Heart left ventricle (tissue), 16 donors: ENCODE measurements at regions of chr11 and their contacts with region 1.

Region 1: GRCh38 chr11:18650859-18651557 is 16.9 kb upstream of the SPTY2D1 start:
- DNase-seq: peak in 4 of 5 donors; percentile 18 to 37 (median 24)
- ATAC-seq: peak in 3 of 4 donors; percentile 13 to 50 (median 22)
- H3K4me3 ChIP-seq: no peak overlapping the region
- H3K27ac ChIP-seq: no peak overlapping the region
- H3K4me1 ChIP-seq: no peaks in the 10 kb centered on the region
- H3K27me3 ChIP-seq: no peaks in the 10 kb centered on the region
- CTCF ChIP-seq: peak in 11 of 12 donors; percentile 20 to 50 (median 44)
- POLR2A ChIP-seq: no peak

Region 2: GRCh38 chr11:18677560-18677959 is 26.6 kb after region 1 on chr11:
- intact Hi-C with region 1: loop called in 1 of 10 experiments (anchors 2 kb)
- DNase-seq: no peak
- ATAC-seq: no peak
- H3K4me3 ChIP-seq: no peak overlapping the region
- H3K27ac ChIP-seq: no peak overlapping the region
- H3K4me1 ChIP-seq: no peaks in the 10 kb centered on the region
- H3K27me3 ChIP-seq: no peaks in the 10 kb centered on the region
- CTCF ChIP-seq: no peak
- POLR2A ChIP-seq: no peak